CD8-positive, alpha-beta memory T cell (primary cell): ENCODE measurements at regions of chr17 and their contacts with region 1.

Region 1: GRCh38 chr17:48522031-48522653 is 8.7 kb downstream of the HOXB1 start:
- DNase-seq: no peak
- H3K4me3 ChIP-seq: no peak overlapping the region
- H3K4me3 Mint-ChIP-seq: no peak overlapping the region
- H3K27ac ChIP-seq: peak overlapping the region; percentile 12
- H3K27ac Mint-ChIP-seq: no peak overlapping the region
- H3K4me1 ChIP-seq: no peaks in the 10 kb centered on the region
- H3K4me1 Mint-ChIP-seq: peaks cover 2 to 11% (median 4%) of the 10 kb centered on the region in 3 donors
- H3K27me3 ChIP-seq: peaks cover 5% of the 10 kb centered on the region
- H3K27me3 Mint-ChIP-seq: peaks cover 47 to 61% of the 10 kb centered on the region in 2 donors

Region 2: GRCh38 chr17:48472411-48473281 is 49.5 kb before region 1 on chr17:
- CTCF ChIA-PET with region 1: no interaction called
- POLR2A ChIA-PET with region 1: interaction called, 11 read pairs
- DNase-seq: peak in 2 of 5 donors; percentile 34 to 49
- H3K4me3 ChIP-seq: no peak overlapping the region
- H3K4me3 Mint-ChIP-seq: peak overlapping the region in 4 of 7 donors; percentile 25 to 51 (median 45)
- H3K27ac ChIP-seq: no peak overlapping the region
- H3K27ac Mint-ChIP-seq: peak overlapping the region in 7 of 8 donors; percentile 25 to 83 (median 73)
- H3K4me1 ChIP-seq: peaks cover 15% of the 10 kb centered on the region
- H3K4me1 Mint-ChIP-seq: peaks cover 16 to 18% (median 16%) of the 10 kb centered on the region in 3 donors
- H3K27me3 ChIP-seq: no peaks in the 10 kb centered on the region
- H3K27me3 Mint-ChIP-seq: peaks cover 0 to 3% of the 10 kb centered on the region in 2 donors

Region 3: GRCh38 chr17:48579760-48580554 is 57.8 kb after region 1 on chr17:
- CTCF ChIA-PET with region 1: interaction called, 3 read pairs
- POLR2A ChIA-PET with region 1: interaction called, 11 read pairs
- DNase-seq: no peak
- H3K4me3 ChIP-seq: no peak overlapping the region
- H3K4me3 Mint-ChIP-seq: peak overlapping the region; percentile 87 to 98 (median 96)
- H3K27ac ChIP-seq: peak overlapping the region; percentile 81
- H3K27ac Mint-ChIP-seq: peak overlapping the region in 3 of 8 donors; percentile 6 to 51 (median 8)
- H3K4me1 ChIP-seq: peaks cover 30% of the 10 kb centered on the region
- H3K4me1 Mint-ChIP-seq: peaks cover 25 to 57% (median 40%) of the 10 kb centered on the region in 3 donors
- H3K27me3 ChIP-seq: peaks cover 44% of the 10 kb centered on the region
- H3K27me3 Mint-ChIP-seq: peaks cover 34 to 55% of the 10 kb centered on the region in 2 donors